Right ventricle myocardium superior (tissue), 1 donor: ENCODE measurements at regions of chr2 and their contacts with region 1.

Region 1: GRCh38 chr2:37389989-37390765 is 45.7 kb downstream of the QPCT start:
- DNase-seq: no peak
- ATAC-seq: peak; percentile 45

Region 2: GRCh38 chr2:37832590-37833197 is 442.5 kb after region 1 on chr2:
- intact Hi-C with region 1: loop called (anchors 5 kb)
- DNase-seq: peak; percentile 89
- ATAC-seq: peak; percentile 86

Region 3: DNA sequence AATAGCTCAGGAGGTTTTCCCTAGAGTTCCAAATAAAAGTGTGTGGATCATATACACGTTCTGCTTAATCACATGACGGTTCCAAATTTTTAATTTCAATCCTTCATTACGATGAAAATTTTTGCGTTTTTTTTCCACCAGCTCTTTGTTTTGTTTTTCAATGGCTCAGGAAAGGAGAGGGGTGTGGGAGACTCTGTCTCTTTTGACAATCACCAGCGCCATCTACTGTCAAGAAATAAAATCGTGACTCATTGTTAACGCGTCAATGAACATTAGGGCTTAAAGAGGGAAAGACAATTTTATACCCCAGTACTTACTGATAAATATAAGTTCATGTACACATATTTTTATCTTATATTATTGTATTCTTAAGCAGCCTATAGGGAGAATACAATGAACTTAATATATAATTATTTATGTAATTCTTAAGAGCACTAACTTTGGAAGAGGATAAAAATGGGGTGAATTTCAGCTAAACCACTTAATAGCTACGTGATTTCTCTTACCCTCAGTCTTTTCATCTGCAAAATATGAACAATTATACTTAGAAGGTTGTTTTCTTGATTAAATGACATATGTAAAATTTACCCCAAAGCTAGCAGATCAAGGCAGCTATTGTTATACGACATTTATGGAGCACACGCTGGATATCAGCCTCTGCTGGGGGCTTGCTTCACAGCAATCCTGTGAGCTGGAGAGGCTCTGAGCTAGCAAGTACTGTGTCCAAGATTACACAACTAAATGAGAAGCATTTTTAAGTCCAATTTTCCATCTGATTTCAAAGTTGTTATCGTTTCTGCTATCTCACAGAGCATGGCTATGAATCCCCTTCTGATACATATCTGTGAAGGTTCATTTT is 487.5 kb after region 1 on chr2:
- intact Hi-C with region 1: loop called (anchors 5 kb)
- DNase-seq: no peak
- ATAC-seq: peak; percentile 78

Region 4: DNA sequence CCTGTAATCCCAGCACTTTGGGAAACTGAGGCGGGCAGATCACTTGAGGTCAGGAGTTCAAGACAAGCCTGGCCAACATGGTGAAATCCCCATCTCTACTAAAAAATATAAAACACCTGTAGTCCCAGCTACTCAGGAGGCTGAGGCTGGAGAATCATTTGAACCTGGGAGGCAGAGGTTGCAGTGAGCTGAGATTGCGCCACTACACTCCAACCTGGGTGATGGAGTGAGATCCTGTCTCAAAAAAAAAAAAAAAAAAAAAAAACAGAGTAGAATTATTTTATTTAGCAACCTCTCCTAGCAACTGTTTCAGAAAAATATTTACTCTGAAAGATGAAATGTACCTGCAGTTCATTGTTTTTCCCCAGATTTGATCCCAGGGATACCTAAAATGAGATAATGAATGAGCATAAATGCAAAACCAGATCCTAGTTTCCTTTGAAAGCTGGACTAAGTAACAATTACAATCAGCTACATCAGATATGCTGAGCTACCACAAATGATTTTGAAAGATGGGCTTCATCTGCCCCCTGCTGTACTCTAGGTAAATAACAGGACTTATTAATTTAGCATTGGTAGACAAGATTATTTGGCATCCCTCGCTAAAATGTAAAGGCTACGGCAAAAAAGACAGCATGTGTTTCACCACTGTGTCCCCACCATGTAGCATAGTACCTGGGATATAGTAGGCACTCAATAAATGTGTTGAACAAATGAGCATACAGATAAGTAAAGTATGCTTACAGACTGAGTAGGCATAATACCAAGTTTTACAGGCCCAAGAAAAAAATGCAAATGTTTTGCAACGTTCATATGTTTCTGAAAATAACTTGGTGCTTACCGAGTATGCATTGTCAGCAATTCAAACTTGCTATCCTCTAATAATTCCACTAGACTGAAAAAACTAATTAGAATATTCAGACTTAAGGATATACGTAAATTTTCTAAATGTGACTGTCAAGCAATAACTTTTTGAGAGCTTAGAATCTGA is 884.4 kb after region 1 on chr2:
- intact Hi-C with region 1: loop called (anchors 10 kb)
- DNase-seq: no peak
- ATAC-seq: peak; percentile 77